ENCODE measurements at regions of chr6 and their contacts with region 1.

Region 1: DNA sequence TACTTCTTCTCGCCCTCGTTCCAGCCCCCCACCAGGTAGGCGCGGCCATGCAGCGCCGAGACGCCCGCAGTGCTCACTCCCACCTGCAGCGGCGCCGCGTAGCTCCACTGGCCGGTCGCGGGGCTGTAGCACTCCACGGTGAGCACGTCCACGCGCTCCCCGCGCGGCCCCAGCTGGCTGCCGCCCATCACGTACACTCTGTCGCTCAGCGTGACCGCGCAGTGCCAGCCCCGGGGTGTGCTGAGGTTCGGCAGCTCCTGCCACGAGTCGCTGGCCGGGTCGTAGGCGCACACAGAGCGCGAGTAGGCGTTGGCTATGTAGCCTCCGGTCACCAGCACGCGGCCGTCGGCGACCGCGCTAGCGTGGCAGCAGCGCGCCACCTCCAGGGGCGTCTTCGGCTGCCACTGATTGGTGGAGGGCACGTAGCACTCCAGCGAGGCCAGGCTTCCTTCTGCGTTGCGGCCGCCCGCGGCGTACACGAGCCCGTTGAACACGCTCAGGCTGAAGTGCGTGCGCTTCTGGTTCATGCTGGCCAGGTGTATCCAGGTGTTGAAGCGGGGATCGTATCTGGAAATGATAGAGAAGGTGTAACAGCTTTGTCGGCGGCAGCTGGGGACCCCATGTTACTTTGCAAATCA is 13.7 kb downstream of the KLHL31 start:
- DNase-seq: peak; percentile 72 to 90
- ATAC-seq: peak; percentile 85 to 90 (median 86)
- H3K4me3 ChIP-seq: peak overlapping the region; percentile 56
- H3K4me3 Mint-ChIP-seq: peak overlapping the region; percentile 96
- H3K27ac ChIP-seq: peak overlapping the region; percentile 20
- H3K27ac Mint-ChIP-seq: peak overlapping the region; percentile 85 to 93
- H3K4me1 ChIP-seq: peaks cover 11% of the 10 kb centered on the region
- H3K4me1 Mint-ChIP-seq: peaks cover 32 to 36% of the 10 kb centered on the region in 2 donors
- H3K27me3 ChIP-seq: no peaks in the 10 kb centered on the region
- H3K27me3 Mint-ChIP-seq: peaks cover 0 to 3% of the 10 kb centered on the region in 2 donors
- CTCF ChIP-seq: no peak

Region 2: GRCh38 chr6:53492860-53493634 is 158.8 kb before region 1 on chr6:
- intact Hi-C with region 1: loop called (anchors 1 kb)
- DNase-seq: peak in 1 of 2 donors; percentile 70
- ATAC-seq: peak; percentile 14 to 69 (median 57)
- H3K4me3 ChIP-seq: no peak overlapping the region
- H3K4me3 Mint-ChIP-seq: no peak overlapping the region
- H3K27ac ChIP-seq: no peak overlapping the region
- H3K27ac Mint-ChIP-seq: no peak overlapping the region
- H3K4me1 ChIP-seq: peaks cover 3% of the 10 kb centered on the region
- H3K4me1 Mint-ChIP-seq: peaks cover 0 to 6% of the 10 kb centered on the region in 2 donors
- H3K27me3 ChIP-seq: no peaks in the 10 kb centered on the region
- H3K27me3 Mint-ChIP-seq: peaks cover 9 to 31% of the 10 kb centered on the region in 2 donors
- CTCF ChIP-seq: peak; percentile 84

Measured in natural killer cell (primary cell).